ENCODE measurements at regions of chr6 and their contacts with region 1.

Region 1: GRCh38 chr6:56955171-56956045 is 501 bp downstream of the BEND6 start:
- DNase-seq: peak; percentile 90 to 95
- ATAC-seq: peak; percentile 70
- H3K4me3 ChIP-seq: peak overlapping the region; percentile 85
- H3K27ac ChIP-seq: no peak overlapping the region
- H3K4me1 ChIP-seq: no peaks in the 10 kb centered on the region
- H3K27me3 ChIP-seq: no peaks in the 10 kb centered on the region

Region 2: DNA sequence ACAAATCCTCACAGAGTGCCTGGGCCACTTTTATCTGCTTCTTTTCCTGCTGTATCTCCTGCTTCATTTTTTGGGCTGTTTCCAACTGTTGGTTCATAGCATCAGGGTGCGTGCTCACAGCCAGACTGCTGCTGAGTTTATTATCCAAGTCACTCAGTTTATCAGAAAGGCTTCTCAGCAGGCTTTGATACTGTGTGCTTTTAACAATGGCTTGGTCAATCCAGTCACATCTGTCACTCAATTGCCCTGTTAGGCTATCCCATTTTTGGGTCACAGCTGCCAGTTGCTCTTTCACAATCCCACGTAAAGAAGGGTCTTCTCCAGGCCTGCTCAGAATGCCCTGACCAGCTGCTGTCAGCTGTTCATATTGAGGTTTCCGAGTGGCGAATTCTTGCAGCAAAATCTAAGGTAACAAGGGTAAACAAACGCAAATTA is 400.0 kb before region 1 on chr6:
- intact Hi-C with region 1: no loop called
- DNase-seq: no peak
- ATAC-seq: no peak
- H3K4me3 ChIP-seq: no peak overlapping the region
- H3K27ac ChIP-seq: peak overlapping the region in 1 of 2 donors; percentile 35
- H3K4me1 ChIP-seq: peaks cover 5 to 7% of the 10 kb centered on the region in 2 donors
- H3K27me3 ChIP-seq: no peaks in the 10 kb centered on the region

Region 3: GRCh38 chr6:56914798-56915658 is 40.4 kb before region 1 on chr6:
- intact Hi-C with region 1: loop called in 1 of 2 experiments (anchors 5 kb)
- DNase-seq: peak in 1 of 2 donors; percentile 52
- ATAC-seq: no peak
- H3K4me3 ChIP-seq: no peak overlapping the region
- H3K27ac ChIP-seq: no peak overlapping the region
- H3K4me1 ChIP-seq: peaks cover 0 to 2% of the 10 kb centered on the region in 2 donors
- H3K27me3 ChIP-seq: no peaks in the 10 kb centered on the region

Region 4: DNA sequence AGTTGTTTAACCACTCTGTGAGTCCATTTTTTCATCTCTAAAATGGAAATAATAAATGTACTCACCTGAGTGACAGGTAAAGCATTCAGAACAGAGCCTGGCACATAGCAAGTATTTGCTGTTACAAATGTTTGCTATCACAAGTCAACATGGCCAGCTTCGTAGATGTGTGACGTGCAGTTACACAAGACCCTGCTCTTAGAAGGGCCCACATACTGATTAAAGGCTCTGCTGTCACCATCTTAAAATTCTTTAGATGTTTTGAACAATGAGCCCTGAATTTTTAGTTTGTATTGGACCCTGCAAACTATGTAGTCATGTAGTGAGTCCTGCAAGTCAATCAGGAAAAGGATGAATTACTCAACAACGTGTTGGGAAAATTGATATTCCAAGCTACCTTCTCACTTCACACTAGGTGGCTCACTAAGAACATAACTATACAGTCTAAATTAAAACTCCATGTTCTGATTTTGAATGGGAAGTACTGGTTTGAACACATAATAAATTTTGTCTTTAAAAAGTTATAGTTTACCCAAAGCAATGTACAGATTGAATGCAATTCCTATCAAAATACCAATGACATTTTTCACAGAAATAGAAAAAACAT is 50.8 kb after region 1 on chr6:
- intact Hi-C with region 1: no loop called
- DNase-seq: no peak
- ATAC-seq: no peak
- H3K4me3 ChIP-seq: no peak overlapping the region
- H3K27ac ChIP-seq: no peak overlapping the region
- H3K4me1 ChIP-seq: no peaks in the 10 kb centered on the region
- H3K27me3 ChIP-seq: no peaks in the 10 kb centered on the region

Region 5: GRCh38 chr6:57021086-57021720 is 65.8 kb after region 1 on chr6:
- intact Hi-C with region 1: loop called in 1 of 2 experiments (anchors 10 kb)
- DNase-seq: no peak
- ATAC-seq: peak; percentile 60
- H3K4me3 ChIP-seq: no peak overlapping the region
- H3K27ac ChIP-seq: no peak overlapping the region
- H3K4me1 ChIP-seq: no peaks in the 10 kb centered on the region
- H3K27me3 ChIP-seq: no peaks in the 10 kb centered on the region

Region 6: DNA sequence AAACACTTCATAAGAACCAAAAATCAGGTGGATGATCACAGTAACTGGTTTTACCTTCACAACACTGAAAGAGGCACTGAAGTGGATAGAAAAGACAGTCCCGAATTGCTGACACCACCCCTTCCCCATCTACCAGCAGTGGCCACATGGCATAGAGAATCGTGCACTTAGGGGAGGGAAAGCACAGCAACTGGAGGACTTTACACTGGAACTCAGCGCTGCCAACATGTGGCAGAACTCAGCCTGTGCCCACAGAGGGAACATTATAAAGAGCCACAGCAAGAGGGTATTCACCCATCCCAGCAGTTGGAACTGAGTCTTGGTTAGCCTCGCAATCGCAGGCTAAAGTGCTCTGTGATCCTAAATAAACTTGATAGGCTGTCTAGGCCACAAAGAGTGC is 84.6 kb after region 1 on chr6:
- intact Hi-C with region 1: no loop called
- DNase-seq: no peak
- ATAC-seq: no peak
- H3K4me3 ChIP-seq: no peak overlapping the region
- H3K27ac ChIP-seq: no peak overlapping the region
- H3K4me1 ChIP-seq: no peaks in the 10 kb centered on the region
- H3K27me3 ChIP-seq: no peaks in the 10 kb centered on the region